ENCODE measurements at regions of chr16 and their contacts with region 1.

Region 1: GRCh38 chr16:74709441-74709877 is 8.8 kb upstream of the MLKL start:
- DNase-seq: peak; percentile 75
- ATAC-seq: peak; percentile 92 to 95

Region 2: GRCh38 chr16:74813109-74813641 is 103.7 kb after region 1 on chr16:
- intact Hi-C with region 1: loop called in 1 of 2 experiments (anchors 5 kb)
- DNase-seq: peak; percentile 72
- ATAC-seq: peak; percentile 98 to 100

Region 3: DNA sequence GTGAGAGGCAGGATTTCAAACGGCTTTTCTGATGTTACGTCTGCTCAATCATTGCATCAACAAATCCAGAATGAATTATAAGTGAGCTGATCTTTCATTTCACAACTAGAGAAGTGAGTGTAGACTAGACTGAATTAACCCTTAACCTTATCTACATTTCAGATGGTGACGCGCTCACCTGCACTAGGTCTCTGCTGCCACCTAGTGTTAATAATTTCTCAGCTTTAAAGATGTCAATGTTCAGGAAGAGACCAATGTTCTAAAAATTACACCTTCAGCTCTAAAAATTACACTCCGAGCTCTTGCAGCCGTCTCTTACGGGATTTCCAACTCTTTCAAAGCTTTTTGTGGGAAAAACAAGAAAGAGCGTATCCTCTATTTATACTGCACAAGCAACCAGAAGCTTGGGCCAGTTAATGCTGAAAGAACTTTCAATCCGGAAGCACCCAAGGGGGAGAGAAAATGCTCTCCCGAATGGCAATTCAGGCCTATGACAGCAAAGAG is 153.3 kb after region 1 on chr16:
- intact Hi-C with region 1: loop called (anchors 2 to 5 kb)
- DNase-seq: no peak
- ATAC-seq: peak in 1 of 2 donors; percentile 52

Region 4: GRCh38 chr16:75130150-75130771 is 420.8 kb after region 1 on chr16:
- intact Hi-C with region 1: loop called in 1 of 2 experiments (anchors 10 kb)
- DNase-seq: no peak
- ATAC-seq: no peak

Measured in left cardiac atrium (tissue), 4 donors.